H1 (cell line): ENCODE measurements at regions of chr1 and their contacts with region 1.

Region 1: DNA sequence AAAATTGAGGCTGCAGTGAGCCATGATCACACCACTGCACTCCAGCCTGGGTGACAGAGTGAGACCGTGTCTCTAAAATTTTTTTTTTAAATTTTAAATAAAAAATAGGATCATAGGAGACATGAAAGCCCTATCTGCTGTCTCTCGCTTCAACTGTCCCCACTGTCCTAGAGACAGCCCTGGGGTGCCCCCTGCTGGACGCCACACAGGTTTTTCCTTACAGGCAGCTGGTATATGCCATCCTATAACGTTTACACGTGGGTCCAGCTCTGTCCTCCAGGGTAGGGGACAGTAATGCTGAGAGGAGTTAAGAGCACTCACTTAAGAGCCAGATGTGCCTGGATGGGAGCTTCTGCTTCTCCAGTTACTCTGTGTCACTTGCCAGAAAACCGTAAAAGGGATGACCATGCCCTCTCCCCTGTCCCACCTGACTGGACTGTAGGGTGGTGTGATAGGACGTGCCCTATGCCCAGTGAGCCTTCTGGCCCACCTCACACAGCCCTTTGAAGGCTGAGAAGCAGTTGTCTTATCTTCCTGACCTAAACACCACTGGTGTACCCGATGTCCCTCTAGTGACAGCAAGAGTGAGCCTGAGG is 8.5 kb downstream of the FBXO2 start:
- DNase-seq: peak in 1 of 2 experiments; percentile 95
- H3K4me3 ChIP-seq: no peak overlapping the region
- H3K27ac ChIP-seq: no peak overlapping the region
- H3K4me1 ChIP-seq: peaks cover under 1 to 16% (median 14%) of the 10 kb centered on the region in 4 experiments
- H3K27me3 ChIP-seq: no peaks in the 10 kb centered on the region
- CTCF ChIP-seq: peak in 2 of 3 experiments; percentile 82 to 85; a peak in 3 of 4 replicates
- EP300 ChIP-seq: no peak
- POLR2A ChIP-seq: no peak
- RAD21 ChIP-seq: peak; percentile 83 to 85

Region 2: GRCh38 chr1:11037740-11038182 is 608.0 kb before region 1 on chr1:
- CTCF ChIA-PET with region 1: interaction called, 19 read pairs
- POLR2A ChIA-PET with region 1: interaction called, 4 read pairs
- DNase-seq: peak; percentile 57 to 93
- H3K4me3 ChIP-seq: no peak overlapping the region
- H3K27ac ChIP-seq: no peak overlapping the region
- H3K4me1 ChIP-seq: no peaks in the 10 kb centered on the region
- H3K27me3 ChIP-seq: no peaks in the 10 kb centered on the region
- CTCF ChIP-seq: peak; percentile 92 to 98 (median 96)
- EP300 ChIP-seq: no peak
- POLR2A ChIP-seq: no peak
- RAD21 ChIP-seq: peak; percentile 100

Region 3: GRCh38 chr1:11320153-11320936 is 325.4 kb before region 1 on chr1:
- CTCF ChIA-PET with region 1: interaction called, 16 read pairs
- POLR2A ChIA-PET with region 1: no interaction called
- DNase-seq: peak; percentile 41 to 91
- H3K4me3 ChIP-seq: no peak overlapping the region
- H3K27ac ChIP-seq: no peak overlapping the region
- H3K4me1 ChIP-seq: peaks cover 0 to 3% (median 0%) of the 10 kb centered on the region in 4 experiments; a peak in 2 of 7 replicates
- H3K27me3 ChIP-seq: no peaks in the 10 kb centered on the region
- CTCF ChIP-seq: peak; percentile 90 to 95 (median 92)
- EP300 ChIP-seq: no peak
- POLR2A ChIP-seq: no peak
- RAD21 ChIP-seq: peak; percentile 88 to 94

Region 4: GRCh38 chr1:11571906-11572616 is 73.7 kb before region 1 on chr1:
- CTCF ChIA-PET with region 1: interaction called, 19 read pairs
- POLR2A ChIA-PET with region 1: interaction called, 3 read pairs
- DNase-seq: peak; percentile 34 to 85
- H3K4me3 ChIP-seq: no peak overlapping the region
- H3K27ac ChIP-seq: no peak overlapping the region
- H3K4me1 ChIP-seq: no peaks in the 10 kb centered on the region
- H3K27me3 ChIP-seq: no peaks in the 10 kb centered on the region
- CTCF ChIP-seq: peak; percentile 30 to 65 (median 59)
- EP300 ChIP-seq: no peak
- POLR2A ChIP-seq: no peak
- RAD21 ChIP-seq: peak; percentile 28 to 63; a peak in 2 of 4 replicates

Region 5: GRCh38 chr1:11629184-11630016 is 16.4 kb before region 1 on chr1:
- CTCF ChIA-PET with region 1: interaction called, 66 read pairs
- POLR2A ChIA-PET with region 1: interaction called, 3 read pairs
- DNase-seq: no peak
- H3K4me3 ChIP-seq: no peak overlapping the region
- H3K27ac ChIP-seq: no peak overlapping the region
- H3K4me1 ChIP-seq: no peaks in the 10 kb centered on the region
- H3K27me3 ChIP-seq: no peaks in the 10 kb centered on the region
- CTCF ChIP-seq: no peak
- EP300 ChIP-seq: no peak
- POLR2A ChIP-seq: no peak
- RAD21 ChIP-seq: no peak

Region 6: GRCh38 chr1:11693024-11693590 is 47.3 kb after region 1 on chr1:
- CTCF ChIA-PET with region 1: interaction called, 3 read pairs
- POLR2A ChIA-PET with region 1: interaction called, 14 read pairs
- DNase-seq: no peak
- H3K4me3 ChIP-seq: peak overlapping the region in 3 of 4 experiments; percentile 75 to 99 (median 79); a peak in 4 of 8 replicates
- H3K27ac ChIP-seq: no peak overlapping the region
- H3K4me1 ChIP-seq: peaks cover 8 to 38% (median 26%) of the 10 kb centered on the region in 4 experiments
- H3K27me3 ChIP-seq: peaks cover 0 to 2% (median 0%) of the 10 kb centered on the region in 4 experiments; a peak in 2 of 7 replicates
- CTCF ChIP-seq: no peak
- EP300 ChIP-seq: no peak
- POLR2A ChIP-seq: 0 out of 3 replicates have a peak, but pooled peaks of 1 of the 2 experiments have one; percentile 8
- RAD21 ChIP-seq: no peak

Region 7: GRCh38 chr1:11719313-11720032 is 73.7 kb after region 1 on chr1:
- CTCF ChIA-PET with region 1: interaction called, 13 read pairs
- POLR2A ChIA-PET with region 1: interaction called, 3 read pairs
- DNase-seq: peak in 1 of 2 experiments; percentile 91
- H3K4me3 ChIP-seq: peak overlapping the region in 2 of 4 experiments; percentile 23 to 46; a peak in 3 of 8 replicates
- H3K27ac ChIP-seq: no peak overlapping the region
- H3K4me1 ChIP-seq: no peaks in the 10 kb centered on the region
- H3K27me3 ChIP-seq: no peaks in the 10 kb centered on the region
- CTCF ChIP-seq: peak; percentile 78 to 92 (median 84)
- EP300 ChIP-seq: no peak
- POLR2A ChIP-seq: no peak
- RAD21 ChIP-seq: peak; percentile 90 to 91